AG04449 (cell line): ENCODE measurements at regions of chr5 and their contacts with region 1.

Region 1: DNA sequence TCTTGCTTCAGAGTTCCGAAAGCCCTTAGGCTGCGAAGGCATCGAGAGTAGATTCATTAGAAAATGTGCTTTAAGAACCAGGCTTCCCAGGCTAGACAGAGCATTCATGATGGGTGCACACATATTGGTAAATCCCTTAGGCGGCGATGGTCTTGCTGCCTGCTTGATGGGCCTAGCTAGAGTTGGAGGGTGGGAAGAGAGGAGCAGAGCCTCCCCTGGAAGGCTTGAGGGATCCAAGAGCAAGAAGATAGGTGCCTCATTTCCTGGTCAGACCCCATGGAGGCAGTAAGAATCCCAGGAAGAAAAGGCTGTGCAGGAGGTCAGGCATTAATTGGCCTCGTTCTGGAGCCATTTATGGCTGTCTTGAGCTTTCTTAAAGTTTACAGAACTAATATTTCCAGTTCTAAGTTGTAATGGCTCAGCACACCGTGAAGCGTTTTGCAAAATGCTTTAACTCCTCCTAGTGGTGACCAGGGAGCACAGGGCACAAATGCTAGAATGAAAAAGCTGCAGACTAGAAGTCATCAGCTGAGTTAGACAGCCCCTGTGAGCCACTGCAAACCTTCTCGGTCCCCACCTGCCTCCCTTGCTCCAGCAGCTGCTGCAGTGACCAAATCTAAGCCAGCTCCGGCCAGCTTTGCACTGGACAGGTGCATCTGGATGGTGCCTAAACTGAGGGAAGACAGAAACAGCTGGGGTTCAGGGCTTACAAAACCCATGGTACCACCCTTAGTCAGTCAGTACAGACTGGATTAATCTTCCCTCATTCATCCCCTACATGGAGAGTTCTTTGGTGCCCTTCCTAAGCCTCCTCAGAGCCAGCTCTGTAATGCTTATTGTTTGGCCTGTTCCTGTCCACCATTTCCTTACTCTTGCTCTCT is 14.7 kb downstream of the SLC45A2 start:
- DNase-seq: no peak
- H3K4me3 ChIP-seq: no peak overlapping the region
- CTCF ChIP-seq: peak; percentile 81

Region 2: DNA sequence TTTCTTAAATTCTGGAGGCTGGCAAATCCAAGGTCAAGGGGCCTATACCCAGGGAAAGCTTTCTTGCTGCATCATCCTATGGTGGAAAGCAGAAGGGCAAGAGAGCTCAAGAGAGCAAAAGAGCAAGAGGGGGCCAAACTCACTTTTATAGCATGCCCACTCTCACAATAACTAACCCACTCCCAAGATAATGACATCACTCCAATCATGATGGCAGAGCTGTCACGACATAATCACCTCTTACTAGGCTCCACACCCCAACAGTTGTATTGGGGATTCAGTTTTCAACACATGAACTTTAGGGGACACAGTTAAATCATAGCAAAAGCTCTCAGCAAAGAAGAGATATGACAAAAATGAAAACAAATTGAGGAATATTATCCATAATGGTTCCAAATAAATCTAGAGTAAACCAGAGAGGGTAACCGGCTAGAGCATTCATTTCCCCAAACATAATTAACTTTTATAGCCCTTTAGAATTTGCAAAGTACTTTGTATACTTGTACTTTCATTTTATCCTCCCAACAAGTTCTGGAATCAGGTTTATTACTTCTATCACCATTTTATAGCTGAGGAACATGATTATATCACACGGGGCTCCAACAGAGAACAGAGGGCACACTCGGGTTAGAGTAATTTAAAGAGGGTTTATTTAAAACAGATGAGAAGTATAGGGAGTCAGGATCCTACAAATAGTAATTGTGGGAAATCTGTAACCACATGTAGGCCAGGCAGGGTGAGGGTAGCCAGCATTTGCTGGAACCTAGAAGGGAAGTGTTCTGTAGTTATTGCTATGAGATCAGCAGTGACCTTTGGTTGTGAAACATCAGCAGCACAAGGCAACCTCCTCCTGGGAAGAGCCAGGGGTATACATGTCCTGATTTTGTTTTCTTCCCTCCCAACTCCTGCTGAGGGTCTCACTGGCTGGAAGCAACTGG is 536.2 kb before region 1 on chr5:
- CTCF ChIA-PET with region 1: interaction called, 38 read pairs
- POLR2A ChIA-PET with region 1: no interaction called
- DNase-seq: no peak
- H3K4me3 ChIP-seq: no peak overlapping the region
- CTCF ChIP-seq: no peak

Region 3: GRCh38 chr5:33462456-33462855 is 507.4 kb before region 1 on chr5:
- CTCF ChIA-PET with region 1: interaction called, 17 read pairs
- POLR2A ChIA-PET with region 1: no interaction called
- DNase-seq: no peak
- H3K4me3 ChIP-seq: no peak overlapping the region
- CTCF ChIP-seq: no peak

Region 4: DNA sequence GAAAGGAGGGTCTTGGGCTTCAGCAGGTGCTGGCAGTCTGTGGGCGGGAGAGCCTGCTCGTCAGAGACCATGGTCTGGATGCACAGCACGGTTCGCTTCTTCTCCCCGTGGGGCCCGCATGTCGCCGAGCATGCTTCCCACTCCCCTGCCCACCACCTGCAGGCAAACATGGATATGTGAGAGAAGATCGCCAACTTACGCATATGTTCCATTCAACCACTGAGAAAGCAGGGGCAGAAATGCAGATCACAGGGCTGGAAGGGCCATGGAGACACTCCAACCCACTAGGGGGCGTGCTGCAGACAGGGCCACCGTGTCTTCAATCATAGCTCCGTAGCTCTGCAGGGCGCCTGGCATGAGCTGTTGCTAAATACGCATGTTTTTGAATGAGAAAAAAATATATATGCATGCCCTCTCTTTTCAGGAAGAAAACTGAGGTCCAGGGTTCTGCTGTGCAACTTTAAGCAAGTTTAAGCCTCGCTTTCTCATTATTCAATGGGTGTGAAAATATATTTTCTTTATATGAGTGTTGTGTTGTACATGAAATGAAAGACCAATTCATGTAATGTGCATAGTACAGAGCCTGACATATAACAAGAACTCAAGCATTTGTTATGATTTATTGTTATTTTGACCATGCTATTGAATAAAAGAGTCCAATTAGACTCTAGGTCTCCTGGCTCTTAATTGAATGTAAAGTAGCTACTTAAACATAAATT is 381.0 kb before region 1 on chr5:
- CTCF ChIA-PET with region 1: interaction called, 11 read pairs
- POLR2A ChIA-PET with region 1: no interaction called
- DNase-seq: no peak
- H3K4me3 ChIP-seq: no peak overlapping the region
- CTCF ChIP-seq: peak; percentile 36

Region 5: DNA sequence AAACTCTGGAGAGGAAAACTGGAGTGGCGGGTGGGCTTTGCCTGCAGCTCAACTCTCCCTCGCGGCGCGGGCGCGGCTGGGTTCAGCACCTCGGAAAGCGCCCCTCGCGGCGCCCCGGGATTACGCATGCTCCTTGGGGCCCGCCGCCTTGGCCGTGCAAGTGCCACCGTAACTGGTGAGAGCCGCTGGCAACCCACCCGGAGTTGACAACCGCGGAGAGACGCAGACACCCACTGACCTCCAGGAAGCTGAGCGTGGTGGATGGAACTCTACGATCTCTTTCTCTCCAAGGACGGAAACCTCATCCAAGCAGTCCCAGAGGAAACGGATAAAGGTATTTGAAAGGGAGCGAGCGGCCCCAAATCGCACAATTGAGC is 33.8 kb before region 1 on chr5:
- CTCF ChIA-PET with region 1: interaction called, 21 read pairs
- POLR2A ChIA-PET with region 1: no interaction called
- DNase-seq: no peak
- H3K4me3 ChIP-seq: peak overlapping the region; percentile 59
- CTCF ChIP-seq: no peak

Region 6: DNA sequence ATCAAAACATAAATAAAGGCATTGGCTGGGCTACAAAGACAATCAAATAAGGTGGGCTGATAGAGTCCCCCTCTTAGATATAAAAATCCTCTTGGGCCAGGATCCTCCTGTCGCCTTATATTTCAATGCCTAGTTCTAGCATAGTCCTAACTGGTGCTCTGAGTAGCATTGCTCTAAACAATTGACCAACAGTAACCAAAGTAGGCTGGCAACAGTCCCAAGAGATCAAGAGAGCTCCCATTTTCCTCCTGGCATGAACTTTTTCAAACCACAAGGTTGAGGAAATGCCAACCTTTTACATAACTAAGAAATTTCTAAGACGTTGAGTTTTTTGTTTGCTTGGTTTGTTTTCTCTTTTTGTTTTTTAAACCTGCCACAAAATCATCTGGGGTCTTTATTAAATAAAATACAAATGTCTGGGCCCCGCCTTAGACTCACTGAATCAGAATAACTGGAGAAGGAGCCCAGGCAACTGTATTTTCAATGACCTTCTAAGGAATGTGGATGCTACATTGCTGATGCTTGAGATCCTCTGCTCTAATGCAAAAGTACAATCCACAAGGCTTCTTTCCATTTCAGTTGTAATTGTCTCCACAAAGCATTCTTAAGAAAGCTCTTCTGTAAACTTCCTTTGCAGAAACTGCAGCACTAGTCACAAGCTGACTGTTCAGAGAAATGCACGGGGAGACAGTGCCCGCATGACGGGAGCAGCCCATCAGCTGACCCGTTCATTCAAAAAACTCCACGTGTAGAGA is 11.8 kb after region 1 on chr5:
- CTCF ChIA-PET with region 1: interaction called, 84 read pairs
- POLR2A ChIA-PET with region 1: no interaction called
- DNase-seq: no peak
- H3K4me3 ChIP-seq: no peak overlapping the region
- CTCF ChIP-seq: no peak

Region 7: GRCh38 chr5:34721327-34721726 is 751.5 kb after region 1 on chr5:
- CTCF ChIA-PET with region 1: no interaction called
- POLR2A ChIA-PET with region 1: no interaction called
- DNase-seq: no peak
- H3K4me3 ChIP-seq: no peak overlapping the region
- CTCF ChIP-seq: no peak